OCI-LY7 (cell line): ENCODE measurements at regions of chr15 and their contacts with region 1.

Region 1: DNA sequence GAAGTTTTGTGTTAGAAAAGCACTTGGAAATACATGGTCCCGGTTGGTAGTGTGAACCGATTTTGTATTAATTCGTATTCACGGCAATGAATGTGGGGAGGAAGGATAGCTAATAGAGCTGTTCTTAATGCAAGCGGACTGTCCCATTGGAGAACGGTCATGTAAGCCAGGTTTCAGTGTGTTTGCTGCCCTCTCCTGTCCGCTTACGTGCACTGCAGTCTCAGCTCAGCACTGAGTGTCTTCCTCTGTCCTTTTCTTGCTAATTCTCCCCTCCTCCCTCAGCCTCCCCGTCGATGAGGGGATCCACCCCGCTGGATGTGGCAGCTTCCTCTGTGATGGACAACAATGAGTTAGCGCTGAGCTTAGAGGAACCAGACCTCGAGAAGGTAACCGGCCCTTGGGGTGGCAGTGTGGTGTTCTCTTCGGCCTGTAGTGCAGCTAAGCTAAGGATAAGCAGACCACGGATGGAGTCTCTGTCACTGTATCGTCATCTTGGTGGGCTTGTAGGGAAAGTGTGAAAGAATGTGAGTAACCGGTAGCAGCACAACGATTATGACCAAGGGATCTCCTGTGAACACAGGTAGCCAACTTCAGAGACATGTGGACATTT is 267.5 kb upstream of the CHRM5 start:
- DNase-seq: peak; percentile 65
- H3K4me3 ChIP-seq: no peak overlapping the region
- H3K27ac ChIP-seq: no peak overlapping the region
- H3K4me1 ChIP-seq: no peaks in the 10 kb centered on the region
- CTCF ChIP-seq: peak; percentile 95

Region 2: GRCh38 chr15:33242669-33243191 is 458.1 kb before region 1 on chr15:
- CTCF ChIA-PET with region 1: no interaction called
- POLR2A ChIA-PET with region 1: no interaction called
- intact Hi-C with region 1: loop called (anchors 2 kb)
- DNase-seq: peak; percentile 44
- H3K4me3 ChIP-seq: no peak overlapping the region
- H3K27ac ChIP-seq: no peak overlapping the region
- H3K4me1 ChIP-seq: peaks cover 9% of the 10 kb centered on the region
- CTCF ChIP-seq: peak; percentile 83

Region 3: GRCh38 chr15:33722005-33722672 is 21.3 kb after region 1 on chr15:
- CTCF ChIA-PET with region 1: no interaction called
- POLR2A ChIA-PET with region 1: no interaction called
- intact Hi-C with region 1: no loop called
- DNase-seq: peak; percentile 13
- H3K4me3 ChIP-seq: no peak overlapping the region
- H3K27ac ChIP-seq: no peak overlapping the region
- H3K4me1 ChIP-seq: no peaks in the 10 kb centered on the region
- CTCF ChIP-seq: no peak